HEK293T (cell line): ENCODE measurements at regions of chr20 and their contacts with region 1.

Region 1: DNA sequence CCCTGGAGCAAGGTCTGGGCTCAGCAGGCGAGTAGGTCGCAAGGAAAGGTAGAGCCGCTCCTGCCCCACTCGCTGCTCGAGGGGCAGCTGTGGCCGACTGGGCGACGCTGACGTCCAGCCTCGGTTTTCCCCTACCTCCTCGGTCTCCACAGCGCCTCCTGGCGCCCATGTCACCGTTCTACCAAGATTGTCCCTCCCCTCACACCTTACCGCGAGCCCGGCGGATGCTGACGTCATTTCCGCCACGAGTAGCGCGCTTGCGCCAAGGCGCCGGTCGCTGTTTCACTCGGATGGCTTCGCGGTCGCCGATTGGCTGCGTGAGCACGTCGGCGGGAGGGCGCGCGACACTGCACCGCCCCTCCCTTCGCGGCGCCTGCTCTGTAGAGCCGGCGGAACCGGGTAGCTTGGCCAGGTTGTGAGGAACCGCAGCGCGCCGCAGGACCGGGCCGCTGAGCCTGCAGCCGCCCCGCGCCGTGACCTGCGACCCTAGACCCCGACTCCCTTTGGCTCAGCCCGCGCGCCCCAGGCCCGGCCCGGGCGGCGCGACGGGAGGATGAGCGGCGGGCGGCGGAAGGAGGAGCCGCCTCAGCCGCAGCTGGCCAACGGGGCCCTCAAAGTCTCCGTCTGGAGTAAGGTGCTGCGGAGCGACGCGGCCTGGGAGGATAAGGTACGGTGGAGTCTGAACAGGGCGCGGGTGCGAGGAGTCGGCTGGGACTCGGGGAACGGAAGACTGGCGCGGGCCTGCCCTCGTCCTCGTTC is at the start of gene RAB5IF:
- DNase-seq: peak; percentile 98

Region 2: GRCh38 chr20:36315542-36316351 is 289.8 kb before region 1 on chr20:
- CTCF ChIA-PET with region 1: no interaction called
- POLR2A ChIA-PET with region 1: no interaction called
- DNase-seq: no peak

Region 3: GRCh38 chr20:36591854-36592641 is 13.5 kb before region 1 on chr20:
- CTCF ChIA-PET with region 1: interaction called, 3 read pairs
- POLR2A ChIA-PET with region 1: interaction called, 18 read pairs
- DNase-seq: peak; percentile 48

Region 4: DNA sequence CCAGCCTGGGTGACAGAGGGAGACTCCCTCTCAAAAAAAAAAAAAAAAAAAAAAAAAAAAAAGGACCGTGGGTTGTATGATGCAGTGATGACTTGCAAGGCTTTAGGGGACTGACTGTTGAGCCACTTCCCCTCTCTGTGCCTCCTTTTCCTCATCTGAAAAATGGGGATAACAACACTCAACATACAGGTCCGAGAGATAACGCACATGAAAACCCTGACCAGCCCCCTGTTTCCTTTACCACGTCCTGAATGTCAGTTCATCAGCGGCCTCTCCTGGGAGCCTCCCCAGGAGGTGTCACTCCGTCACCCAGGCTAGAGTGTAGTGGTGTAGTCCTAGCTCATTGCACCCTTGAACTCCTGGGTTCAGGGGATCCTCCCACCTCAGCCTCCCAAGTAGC is 36.6 kb after region 1 on chr20:
- CTCF ChIA-PET with region 1: no interaction called
- POLR2A ChIA-PET with region 1: no interaction called
- DNase-seq: no peak

Region 5: GRCh38 chr20:36835453-36836198 is 230.0 kb after region 1 on chr20:
- CTCF ChIA-PET with region 1: no interaction called
- POLR2A ChIA-PET with region 1: no interaction called
- DNase-seq: peak; percentile 94